Sciatic nerve (tissue), 2 donors: ENCODE measurements at regions of chr15 and their contacts with region 1.

Region 1: GRCh38 chr15:100349696-100350433 is 8.1 kb upstream of the ADAMTS17 start:
- DNase-seq: peak; percentile 97
- ATAC-seq: peak; percentile 98

Region 2: GRCh38 chr15:99931703-99932603 is 417.9 kb before region 1 on chr15:
- intact Hi-C with region 1: loop called (anchors 10 kb)
- DNase-seq: no peak
- ATAC-seq: no peak

Region 3: GRCh38 chr15:100308213-100308600 is 41.7 kb before region 1 on chr15:
- intact Hi-C with region 1: no loop called
- DNase-seq: no peak
- ATAC-seq: peak; percentile 79